Dendritic cell treated with granulocyte-macrophage colony-stimulating factor and Interleukin-4, amounts not matched to agents 40 ng/mL and 50 ng/mL, for 4 days (primary cell): ENCODE measurements at regions of chr4 and their contacts with region 1.

Region 1: DNA sequence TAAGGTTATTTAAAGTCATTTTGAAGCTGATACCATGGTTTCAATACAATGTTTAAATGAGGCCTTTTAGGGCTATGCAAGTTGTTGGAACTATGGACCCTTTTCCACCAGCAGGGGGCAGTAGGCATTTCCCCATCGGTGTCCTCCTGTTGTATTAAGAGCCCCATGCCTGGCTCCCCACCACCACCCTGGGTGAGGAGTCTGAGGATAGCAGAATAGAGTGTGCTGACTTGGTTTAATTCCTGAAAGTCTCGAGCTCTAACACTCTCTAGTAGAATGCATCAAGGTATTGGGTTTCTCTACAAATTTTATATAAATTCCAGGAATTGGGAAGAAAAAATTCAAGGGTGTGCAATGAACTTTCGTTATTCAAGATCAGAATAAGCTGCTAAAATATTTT is 234.8 kb upstream of the JADE1 start:
- H3K4me3 Mint-ChIP-seq: no peak overlapping the region
- H3K27ac Mint-ChIP-seq: no peak overlapping the region
- H3K4me1 Mint-ChIP-seq: peaks cover 33% of the 10 kb centered on the region
- H3K27me3 Mint-ChIP-seq: no peaks in the 10 kb centered on the region

Region 2: DNA sequence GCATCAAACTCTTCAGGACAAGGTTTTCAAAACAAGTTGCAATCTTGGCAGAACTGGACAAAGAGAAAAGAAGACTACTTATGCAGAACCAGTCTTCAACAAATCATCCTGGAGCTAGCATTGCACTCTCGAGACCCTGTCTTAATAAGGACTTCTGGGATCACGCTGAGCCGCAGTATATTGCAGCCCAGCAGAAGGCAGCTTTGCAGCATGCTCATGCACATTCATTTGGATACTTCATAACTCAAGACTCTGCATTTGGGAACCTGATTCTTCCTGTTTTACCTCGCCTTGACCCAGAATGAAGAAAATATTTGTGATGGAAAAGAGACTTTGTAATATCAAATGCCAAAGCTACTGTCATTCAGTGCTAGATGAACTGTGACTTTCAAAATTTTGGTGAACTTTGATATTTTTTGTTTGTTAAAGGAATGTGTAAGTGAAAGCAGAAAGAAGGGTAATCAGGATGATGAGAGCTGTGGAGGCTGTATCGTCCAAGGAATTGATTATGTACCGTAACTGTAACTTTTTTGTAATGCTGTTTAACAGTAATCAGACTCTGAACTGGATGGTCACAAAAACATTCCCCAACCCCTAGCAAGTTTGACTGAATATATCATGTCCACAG is 765.4 kb before region 1 on chr4:
- intact Hi-C with region 1: no loop called
- H3K4me3 Mint-ChIP-seq: no peak overlapping the region
- H3K27ac Mint-ChIP-seq: no peak overlapping the region
- H3K4me1 Mint-ChIP-seq: no peaks in the 10 kb centered on the region
- H3K27me3 Mint-ChIP-seq: no peaks in the 10 kb centered on the region

Region 3: DNA sequence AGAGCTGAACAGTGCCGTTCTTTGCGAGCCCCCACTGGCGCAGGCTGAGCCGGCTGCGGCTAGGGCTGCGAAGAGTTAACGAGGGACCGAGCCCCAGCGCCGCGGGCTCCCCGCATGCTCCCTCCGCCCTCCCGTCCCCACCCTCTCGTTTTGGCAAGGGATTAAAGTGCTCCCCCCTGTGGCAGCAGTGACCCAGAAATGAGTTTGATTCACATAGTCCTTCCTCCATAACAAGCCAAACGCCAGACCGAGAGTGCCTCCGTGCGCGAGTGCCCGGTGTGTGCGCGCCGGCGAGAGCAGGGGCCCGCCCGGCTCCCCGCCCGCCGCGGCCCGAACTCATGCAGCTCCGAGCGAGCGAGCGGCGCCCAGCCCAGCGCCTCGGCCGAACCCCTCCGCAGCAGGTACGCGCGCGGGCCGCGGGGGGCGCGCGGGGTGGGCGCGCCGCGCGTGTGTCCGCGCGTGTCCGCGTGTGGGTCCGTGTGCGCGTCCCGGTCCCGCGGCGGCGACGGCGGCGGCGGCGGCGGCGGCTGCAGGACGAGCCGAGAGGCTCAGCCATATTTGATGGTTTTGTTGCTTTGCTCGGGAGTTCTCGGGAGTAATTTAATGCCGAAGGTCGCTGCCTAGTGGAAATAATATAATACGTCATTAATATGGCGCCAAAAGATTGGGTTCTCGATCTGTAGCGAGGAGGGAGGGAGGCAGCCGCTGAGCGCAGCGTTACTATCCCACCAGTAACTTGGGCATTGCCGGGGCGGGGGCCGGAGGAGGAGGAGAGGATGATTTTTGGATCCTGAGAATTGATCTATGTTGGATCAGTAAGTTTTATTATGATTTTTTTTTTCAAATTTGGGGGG is 235.0 kb after region 1 on chr4 and contains the start of gene JADE1:
- intact Hi-C with region 1: loop called (anchors 5 kb)
- H3K4me3 Mint-ChIP-seq: peak within 1 kb of the TSS; percentile 89
- H3K27ac Mint-ChIP-seq: peak within 1 kb of the TSS; percentile 92
- H3K4me1 Mint-ChIP-seq: peaks cover 9% of the 10 kb centered on the region
- H3K27me3 Mint-ChIP-seq: peaks cover 3% of the 10 kb centered on the region